PC-9 (cell line): ENCODE measurements at regions of chr1 and their contacts with region 1.

Region 1: DNA sequence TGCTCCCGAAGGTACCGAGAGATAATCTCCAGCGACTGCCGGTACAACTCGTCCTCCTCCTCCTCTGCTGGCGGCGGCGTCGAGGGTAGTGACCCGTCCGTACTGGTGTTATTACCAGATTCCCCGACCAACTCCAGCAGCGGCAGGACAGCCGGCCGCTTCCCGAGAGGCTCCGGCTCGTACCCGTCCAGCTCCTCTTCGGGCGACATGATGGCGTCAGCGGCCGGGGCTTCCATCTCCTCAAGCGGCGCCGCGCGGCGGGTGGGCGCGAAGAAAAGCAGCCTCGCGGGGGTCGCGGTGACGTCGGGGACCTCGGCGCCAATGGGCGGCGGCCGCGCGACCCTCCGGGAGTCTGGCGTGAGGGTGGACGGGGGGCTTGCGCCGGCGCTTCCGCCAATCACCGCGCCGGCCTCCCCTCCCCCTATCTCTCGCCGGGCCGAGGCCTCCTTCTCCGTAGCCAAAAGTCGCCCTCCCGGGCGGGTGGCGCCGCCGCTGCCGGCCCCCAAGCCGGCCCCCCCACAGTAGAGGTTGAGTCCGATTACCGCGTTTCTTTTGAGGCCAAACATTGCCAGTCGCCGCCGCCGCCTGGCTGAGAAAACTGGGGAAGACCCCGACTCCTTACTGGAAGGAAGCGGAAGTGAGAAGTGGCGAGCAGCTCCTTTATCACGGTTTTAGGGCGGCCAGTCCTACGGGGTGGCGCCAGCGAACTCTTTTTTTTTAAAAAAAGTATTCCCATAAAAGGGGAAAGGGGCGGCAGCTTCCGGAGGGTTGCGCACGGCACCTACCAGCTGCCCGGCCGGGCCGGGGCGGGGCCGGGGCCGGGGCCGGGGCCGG is at the start of gene MCL1:
- DNase-seq: peak; percentile 90
- H3K4me3 ChIP-seq: peak within 1 kb of the TSS; percentile 73
- H3K27ac ChIP-seq: peak within 1 kb of the TSS; percentile 93
- H3K4me1 ChIP-seq: peaks cover 32% of the 10 kb centered on the region
- H3K27me3 ChIP-seq: no peaks in the 10 kb centered on the region
- CTCF ChIP-seq: no peak
- total RNA-seq, gene MCL1: 145 and 178 TPM in 2 replicates

Region 2: DNA sequence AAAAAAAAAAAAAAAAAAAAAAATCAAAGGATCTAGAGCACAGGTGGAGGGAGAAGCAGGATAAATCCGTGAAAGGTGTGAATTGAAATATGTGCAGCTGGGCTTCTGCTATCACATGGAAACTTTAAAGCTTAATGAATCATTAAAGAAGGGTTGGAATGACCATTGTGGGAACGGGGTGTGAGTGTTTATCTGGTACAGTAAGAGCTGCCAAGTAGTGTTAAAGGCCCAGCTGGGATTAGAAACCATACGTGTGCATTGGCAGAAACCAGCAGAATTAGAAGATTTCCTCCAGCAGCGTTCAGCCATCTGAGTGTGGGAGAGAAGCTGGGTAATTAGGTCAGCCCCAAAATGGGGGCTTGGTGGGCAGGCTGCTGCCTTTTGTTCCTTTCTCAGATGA is 50.2 kb before region 1 on chr1:
- CTCF ChIA-PET with region 1: no interaction called
- POLR2A ChIA-PET with region 1: interaction called, 14 read pairs
- intact Hi-C with region 1: no loop called
- DNase-seq: peak in 1 of 2 experiments; percentile 49
- H3K4me3 ChIP-seq: no peak overlapping the region
- H3K27ac ChIP-seq: no peak overlapping the region
- H3K4me1 ChIP-seq: no peaks in the 10 kb centered on the region
- H3K27me3 ChIP-seq: no peaks in the 10 kb centered on the region
- CTCF ChIP-seq: no peak

Region 3: DNA sequence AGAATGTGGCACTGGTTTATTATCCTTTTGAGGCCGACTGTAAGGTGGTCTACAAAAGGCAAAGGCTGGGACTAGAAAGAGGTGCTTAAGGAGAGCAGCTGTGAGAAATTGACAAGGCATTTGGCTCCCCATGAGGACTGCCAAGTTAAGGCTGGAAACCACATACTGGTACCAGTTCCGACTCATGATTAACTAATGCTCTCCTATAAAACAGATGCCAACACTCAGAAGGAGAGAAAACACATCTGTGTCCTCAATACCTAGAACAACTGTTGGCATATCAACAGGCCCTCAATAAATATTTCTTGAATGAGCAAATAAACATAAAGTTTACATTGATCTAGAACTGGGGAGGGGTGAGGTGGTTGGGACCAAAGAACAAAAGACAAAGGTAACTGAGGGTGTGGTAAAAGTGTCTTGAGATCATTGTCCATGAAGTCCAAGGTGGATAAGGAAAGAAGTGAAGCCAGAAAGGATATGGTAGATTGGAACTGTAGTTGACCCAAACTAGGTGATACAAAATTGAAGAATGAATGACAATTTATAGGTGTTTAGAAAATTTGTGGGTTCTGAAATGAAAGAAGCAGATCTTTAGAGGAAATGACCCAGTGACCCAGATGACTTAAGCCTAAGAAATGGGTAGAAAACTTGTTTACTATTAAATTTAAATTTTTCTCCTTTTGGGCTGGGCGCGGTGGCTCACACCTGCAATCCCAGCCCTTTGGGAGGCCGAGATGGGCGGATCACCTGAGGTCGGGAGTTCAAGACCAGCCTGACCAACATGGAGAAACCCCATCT is 17.1 kb after region 1 on chr1:
- CTCF ChIA-PET with region 1: no interaction called
- POLR2A ChIA-PET with region 1: interaction called, 17 read pairs
- intact Hi-C with region 1: no loop called
- DNase-seq: no peak
- H3K4me3 ChIP-seq: no peak overlapping the region
- H3K27ac ChIP-seq: 0 out of 2 replicates have a peak overlapping the region, but pooled peaks have one; percentile 17
- H3K4me1 ChIP-seq: peaks cover 30% of the 10 kb centered on the region
- H3K27me3 ChIP-seq: no peaks in the 10 kb centered on the region
- CTCF ChIP-seq: no peak

Region 4: DNA sequence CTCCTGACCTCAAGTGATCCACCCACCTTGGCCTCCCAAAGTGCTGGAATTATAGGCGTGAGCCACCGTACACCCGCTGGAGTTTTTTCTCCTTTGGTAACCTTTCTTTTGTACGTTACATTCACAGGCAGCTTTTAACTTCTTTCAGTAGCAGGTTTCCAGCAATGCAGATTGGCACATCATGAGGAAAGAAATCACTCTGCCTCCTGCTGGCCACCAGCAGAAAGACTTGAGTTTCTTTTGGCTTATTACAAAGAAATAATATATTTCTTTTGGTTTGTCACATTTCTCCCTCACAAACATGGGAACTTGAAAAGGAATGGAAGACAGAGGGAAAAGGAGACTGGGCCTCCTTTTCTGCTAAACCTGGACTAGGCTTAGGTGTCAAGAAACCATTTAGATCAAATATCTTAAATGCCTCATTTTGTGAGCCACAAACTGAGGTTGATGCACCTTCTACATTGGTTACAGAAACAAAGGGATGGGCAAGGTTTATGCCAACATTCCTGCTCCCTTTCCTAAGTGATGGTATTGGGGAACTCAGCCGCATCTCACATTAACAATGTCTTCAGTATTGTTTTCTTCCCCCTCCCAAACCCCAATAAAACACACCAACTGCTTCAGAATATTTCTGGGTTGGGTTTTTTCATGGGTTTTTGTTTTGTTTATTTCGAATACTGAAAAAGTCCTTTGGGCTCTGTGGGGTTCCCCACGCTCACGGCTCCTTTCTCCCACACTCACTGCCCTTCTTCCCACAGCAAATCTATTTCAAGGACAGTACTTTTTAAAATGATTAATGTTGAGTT is 42.5 kb after region 1 on chr1:
- CTCF ChIA-PET with region 1: no interaction called
- POLR2A ChIA-PET with region 1: interaction called, 26 read pairs
- intact Hi-C with region 1: no loop called
- DNase-seq: no peak
- H3K4me3 ChIP-seq: no peak overlapping the region
- H3K27ac ChIP-seq: peak overlapping the region; percentile 9; the same call in 1 of the 2 replicates
- H3K4me1 ChIP-seq: peaks cover 57% of the 10 kb centered on the region
- H3K27me3 ChIP-seq: no peaks in the 10 kb centered on the region
- CTCF ChIP-seq: peak; percentile 73

Region 5: DNA sequence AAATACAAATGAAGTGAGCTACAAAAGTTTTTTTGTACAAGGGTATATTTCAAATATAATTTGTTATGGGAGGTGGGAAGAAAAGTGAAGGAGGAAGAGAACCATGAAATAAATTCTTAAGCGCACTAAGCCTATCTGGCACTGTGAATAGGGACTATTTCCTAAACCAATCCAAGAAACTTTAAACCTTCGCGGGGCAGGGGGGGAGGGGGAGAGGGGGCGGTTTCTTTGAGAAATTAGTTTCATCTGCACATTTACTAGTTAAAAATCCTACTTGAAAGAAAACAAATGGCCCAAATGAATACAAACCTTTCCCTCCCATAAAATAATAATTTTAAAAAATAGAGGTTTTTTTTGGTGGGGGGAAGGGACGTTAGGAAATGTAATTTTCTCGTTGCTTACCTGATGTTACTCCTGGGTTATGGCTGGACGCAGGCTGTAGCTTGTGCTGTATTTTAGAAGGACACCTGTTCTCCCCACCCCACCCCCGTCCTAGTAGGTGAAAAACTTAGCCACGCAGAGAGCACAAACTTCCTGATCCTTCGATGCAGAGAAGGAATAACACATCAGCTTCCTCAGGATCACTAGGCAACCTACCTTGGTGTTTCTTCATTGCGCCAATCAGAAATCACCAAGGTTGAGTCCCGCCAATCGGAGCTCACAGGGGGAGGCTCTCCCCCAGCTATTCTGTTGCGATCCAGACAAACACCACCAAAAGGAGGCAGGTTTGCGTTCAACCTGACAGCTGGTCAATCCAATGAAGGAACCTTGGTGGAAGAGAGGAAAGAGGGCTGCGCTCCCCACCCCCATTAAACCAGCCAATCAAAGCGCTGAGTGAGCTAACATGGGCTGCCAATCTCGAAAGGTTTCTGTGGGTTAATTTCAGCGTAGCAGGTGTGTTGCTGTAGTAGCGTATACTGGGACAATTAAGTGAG is 117.7 kb after region 1 on chr1 and contains the start of gene GOLPH3L:
- CTCF ChIA-PET with region 1: no interaction called
- POLR2A ChIA-PET with region 1: interaction called, 15 read pairs
- intact Hi-C with region 1: no loop called
- DNase-seq: peak; percentile 95 to 99
- H3K4me3 ChIP-seq: peak within 1 kb of the TSS; percentile 83
- H3K27ac ChIP-seq: peak within 1 kb of the TSS; percentile 40
- H3K4me1 ChIP-seq: peaks cover 10% of the 10 kb centered on the region
- H3K27me3 ChIP-seq: no peaks in the 10 kb centered on the region
- CTCF ChIP-seq: no peak
- total RNA-seq, gene GOLPH3L: 36.5 and 52.7 TPM in 2 replicates

Region 6: GRCh38 chr1:150906341-150906740 is 327.2 kb after region 1 on chr1:
- CTCF ChIA-PET with region 1: interaction called, 35 read pairs
- POLR2A ChIA-PET with region 1: interaction called, 6 read pairs
- intact Hi-C with region 1: no loop called
- DNase-seq: peak in 1 of 2 experiments; percentile 45
- H3K4me3 ChIP-seq: no peak overlapping the region
- H3K27ac ChIP-seq: no peak overlapping the region
- H3K4me1 ChIP-seq: peaks cover 10% of the 10 kb centered on the region
- H3K27me3 ChIP-seq: no peaks in the 10 kb centered on the region
- CTCF ChIP-seq: no peak

Region 7: GRCh38 chr1:151047925-151048645 is 468.9 kb after region 1 on chr1:
- CTCF ChIA-PET with region 1: no interaction called
- POLR2A ChIA-PET with region 1: interaction called, 18 read pairs
- intact Hi-C with region 1: no loop called
- DNase-seq: peak; percentile 57 to 63
- H3K4me3 ChIP-seq: peak overlapping the region; percentile 66
- H3K27ac ChIP-seq: peak overlapping the region; percentile 9
- H3K4me1 ChIP-seq: peaks cover 5% of the 10 kb centered on the region
- H3K27me3 ChIP-seq: no peaks in the 10 kb centered on the region
- CTCF ChIP-seq: no peak; the same call in 1 of the 2 replicates